Mammary epithelial cell (primary cell): ENCODE measurements at regions of chr10 and their contacts with region 1.

Region 1: DNA sequence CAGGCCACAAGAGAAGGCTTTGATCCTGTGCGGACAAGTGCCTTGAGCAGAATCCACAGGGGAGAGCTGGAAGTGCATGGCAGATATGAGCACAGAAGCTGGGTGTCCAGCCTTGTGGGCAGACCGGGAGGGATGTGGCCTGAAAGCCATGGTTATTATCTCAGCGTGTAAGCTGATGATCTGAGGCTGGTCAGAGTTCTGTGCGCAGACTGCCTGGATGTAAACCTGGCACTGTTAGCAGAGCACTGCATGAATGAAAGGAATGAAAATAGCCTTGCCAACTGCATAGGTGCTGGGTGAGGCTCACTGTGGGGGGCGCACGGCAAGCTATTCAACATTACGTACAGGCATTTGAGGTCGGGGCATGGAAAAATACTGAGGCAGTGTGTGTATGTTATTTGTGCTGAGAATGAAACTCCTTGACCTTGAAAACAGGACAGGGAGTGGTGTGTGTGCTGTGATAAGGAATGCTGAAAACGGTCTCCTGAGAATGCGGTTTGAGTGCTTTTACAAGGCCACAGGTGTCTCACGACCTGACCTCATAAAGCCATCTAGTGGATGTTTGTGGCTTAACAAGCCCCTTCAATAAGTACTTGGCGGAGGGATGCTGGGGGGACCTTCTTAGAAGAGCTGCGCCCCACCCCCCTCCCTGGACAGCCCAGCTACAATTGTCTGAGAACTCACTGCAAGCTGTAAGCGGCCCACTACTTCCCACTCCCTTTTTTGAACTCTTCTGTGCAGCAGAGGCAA is 18.7 kb downstream of the AKR1C1 start:
- DNase-seq: peak; percentile 16
- H3K4me3 ChIP-seq: no peak overlapping the region
- H3K27ac ChIP-seq: no peak overlapping the region
- H3K4me1 ChIP-seq: no peaks in the 10 kb centered on the region
- H3K27me3 ChIP-seq: no peaks in the 10 kb centered on the region
- CTCF ChIP-seq: peak; percentile 49

Region 2: DNA sequence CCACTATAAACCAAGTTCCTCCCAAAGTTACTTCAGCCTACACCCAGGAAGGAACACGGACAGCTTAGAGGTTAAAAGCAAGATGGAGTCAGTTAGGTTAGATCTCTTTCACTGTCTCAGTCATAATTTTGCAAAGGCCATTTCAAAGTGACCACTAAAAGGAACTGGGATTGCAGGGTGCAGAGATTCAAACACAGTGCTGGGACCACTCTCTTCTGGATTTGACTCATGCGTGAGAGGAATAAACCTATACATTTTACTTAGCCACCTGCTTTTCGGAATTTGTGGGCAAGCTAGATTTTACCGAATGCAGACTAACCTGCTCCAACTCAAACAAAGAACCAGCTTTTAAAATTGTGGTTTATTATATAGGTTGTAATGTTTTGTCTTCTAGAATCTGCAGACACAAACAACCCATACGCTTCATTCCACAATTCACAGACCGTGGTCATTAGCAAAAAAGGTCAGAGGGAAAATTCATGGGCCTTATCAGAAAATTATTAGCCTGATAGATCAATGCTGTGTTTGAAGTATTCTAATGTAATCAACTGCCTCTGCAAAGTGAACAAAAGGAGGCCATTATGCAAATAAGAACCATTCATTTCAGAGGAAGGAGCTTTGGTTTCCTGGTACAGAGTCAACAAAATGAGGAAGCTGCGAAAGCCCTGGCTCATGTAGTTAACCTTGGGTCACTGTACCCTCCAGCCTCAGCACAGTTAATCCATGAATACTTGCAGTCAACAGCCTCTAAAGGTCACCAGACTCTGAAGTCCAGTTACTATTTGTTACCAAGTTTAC is 854.2 kb before region 1 on chr10:
- CTCF ChIA-PET with region 1: no interaction called
- dilution Hi-C with region 1: no loop called
- in situ Hi-C with region 1: no loop called
- intact Hi-C with region 1: no loop called
- DNase-seq: no peak
- H3K4me3 ChIP-seq: no peak overlapping the region
- H3K27ac ChIP-seq: no peak overlapping the region
- H3K4me1 ChIP-seq: peaks cover 22% of the 10 kb centered on the region
- H3K27me3 ChIP-seq: no peaks in the 10 kb centered on the region
- CTCF ChIP-seq: no peak

Region 3: DNA sequence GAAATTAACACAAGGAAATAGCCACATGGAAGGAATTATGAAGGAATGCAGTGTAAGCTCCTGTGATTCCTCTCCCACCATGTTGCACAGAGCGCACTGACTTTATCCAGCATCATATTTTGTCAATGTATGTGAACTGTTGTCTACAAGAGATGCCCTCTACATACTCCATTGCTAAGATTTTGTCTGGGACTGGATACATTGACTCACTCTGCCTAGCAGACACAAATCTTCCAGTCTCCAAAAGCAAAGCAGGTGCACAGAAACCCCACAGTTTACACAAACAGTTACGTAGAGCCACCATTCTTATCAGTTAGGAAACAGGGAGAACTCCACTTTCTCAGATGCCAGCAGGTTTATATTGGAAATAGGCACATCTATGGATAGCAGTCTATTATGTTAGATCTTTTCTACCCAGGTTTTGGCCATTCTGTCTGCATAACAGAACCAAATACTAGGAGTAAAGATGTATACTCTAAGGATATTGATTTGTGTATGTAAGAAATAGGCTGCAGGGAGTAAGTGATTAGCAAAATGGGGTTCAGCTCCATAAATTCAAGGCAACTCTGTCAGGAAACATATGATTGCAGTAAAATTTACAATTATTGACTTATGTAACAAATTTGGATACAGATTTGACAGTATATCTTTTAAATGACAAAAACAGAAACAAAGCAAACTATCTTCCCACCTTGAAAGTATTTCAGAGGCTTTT is 20.3 kb after region 1 on chr10:
- CTCF ChIA-PET with region 1: no interaction called
- dilution Hi-C with region 1: no loop called
- in situ Hi-C with region 1: no loop called
- intact Hi-C with region 1: no loop called
- DNase-seq: no peak
- H3K4me3 ChIP-seq: peak overlapping the region in 2 of 3 experiments; percentile 2 to 32
- H3K27ac ChIP-seq: no peak overlapping the region
- H3K4me1 ChIP-seq: peaks cover 4% of the 10 kb centered on the region
- H3K27me3 ChIP-seq: no peaks in the 10 kb centered on the region
- CTCF ChIP-seq: no peak

Region 4: GRCh38 chr10:5659702-5660528 is 678.0 kb after region 1 on chr10:
- CTCF ChIA-PET with region 1: no interaction called
- dilution Hi-C with region 1: no loop called
- in situ Hi-C with region 1: no loop called
- intact Hi-C with region 1: loop called (anchors 5 kb)
- DNase-seq: peak; percentile 73
- H3K4me3 ChIP-seq: no peak overlapping the region
- H3K27ac ChIP-seq: no peak overlapping the region
- H3K4me1 ChIP-seq: peaks cover 11% of the 10 kb centered on the region
- H3K27me3 ChIP-seq: no peaks in the 10 kb centered on the region
- CTCF ChIP-seq: no peak